Sciatic nerve (tissue), 2 donors: ENCODE measurements at regions of chr17 and their contacts with region 1.

Region 1: DNA sequence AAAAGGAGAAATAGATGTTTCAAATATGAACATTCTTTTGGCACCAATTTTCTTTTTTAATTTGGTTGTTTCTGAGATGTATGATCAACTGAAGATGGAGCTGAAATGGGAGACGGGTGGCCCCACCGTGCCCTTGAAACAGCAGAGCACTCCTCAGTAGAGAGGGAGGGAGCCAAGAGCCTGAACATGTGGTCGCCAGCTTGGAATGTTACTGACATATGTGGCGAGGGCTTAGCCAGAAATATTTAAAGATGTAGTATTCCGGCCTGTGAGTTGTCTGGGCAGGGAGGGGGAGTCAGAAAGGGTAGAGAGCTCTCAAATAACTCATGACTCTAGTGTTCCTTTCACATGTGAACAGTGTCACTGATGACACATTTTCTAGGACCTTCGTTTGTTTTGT is 13.3 kb upstream of the MRC2 start:
- DNase-seq: no peak
- ATAC-seq: peak; percentile 16

Region 2: GRCh38 chr17:62662716-62663498 is 48.8 kb after region 1 on chr17:
- intact Hi-C with region 1: loop called (anchors 5 kb)
- DNase-seq: no peak
- ATAC-seq: no peak